Posterior vena cava (tissue), 2 donors: ENCODE measurements at regions of chr9 and their contacts with region 1.

Region 1: DNA sequence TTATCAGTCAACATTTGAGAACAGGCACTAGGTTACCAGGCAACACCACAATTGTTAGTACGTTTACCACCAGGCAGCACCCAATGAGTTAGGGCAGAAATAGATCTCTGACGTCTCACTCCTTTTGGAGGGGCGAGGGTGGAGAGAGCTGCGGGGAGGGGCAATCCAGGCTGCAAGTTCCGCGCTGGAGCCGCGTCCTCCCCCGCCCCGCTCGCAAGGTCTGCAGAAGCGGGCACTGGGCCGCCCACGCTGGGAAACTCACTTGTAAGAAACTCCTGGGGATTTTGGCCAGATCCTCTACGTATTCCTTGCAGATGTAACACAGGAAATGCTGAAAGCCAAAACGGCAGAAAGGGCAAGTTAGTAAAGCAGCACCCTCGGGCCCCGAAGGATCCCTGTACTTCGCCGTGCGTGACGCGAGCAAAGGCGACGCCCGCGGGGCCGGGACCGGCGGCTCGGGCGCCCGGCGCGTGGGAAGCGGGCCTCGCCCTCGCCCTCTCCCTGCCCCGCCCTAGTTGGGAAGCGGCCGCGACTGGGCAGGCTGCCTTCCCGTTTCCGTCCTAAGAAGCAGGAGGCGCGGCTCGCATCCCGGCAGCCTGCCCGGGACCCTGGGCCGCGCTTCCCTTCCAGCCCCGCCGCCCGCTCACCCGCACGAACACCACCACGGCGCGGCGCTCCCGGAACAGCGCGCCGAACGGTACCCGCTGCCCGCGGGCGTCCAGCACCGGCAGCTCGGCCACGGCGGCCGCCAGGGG is 497 bp downstream of the PRXL2C start:
- DNase-seq: peak; percentile 96

Region 2: DNA sequence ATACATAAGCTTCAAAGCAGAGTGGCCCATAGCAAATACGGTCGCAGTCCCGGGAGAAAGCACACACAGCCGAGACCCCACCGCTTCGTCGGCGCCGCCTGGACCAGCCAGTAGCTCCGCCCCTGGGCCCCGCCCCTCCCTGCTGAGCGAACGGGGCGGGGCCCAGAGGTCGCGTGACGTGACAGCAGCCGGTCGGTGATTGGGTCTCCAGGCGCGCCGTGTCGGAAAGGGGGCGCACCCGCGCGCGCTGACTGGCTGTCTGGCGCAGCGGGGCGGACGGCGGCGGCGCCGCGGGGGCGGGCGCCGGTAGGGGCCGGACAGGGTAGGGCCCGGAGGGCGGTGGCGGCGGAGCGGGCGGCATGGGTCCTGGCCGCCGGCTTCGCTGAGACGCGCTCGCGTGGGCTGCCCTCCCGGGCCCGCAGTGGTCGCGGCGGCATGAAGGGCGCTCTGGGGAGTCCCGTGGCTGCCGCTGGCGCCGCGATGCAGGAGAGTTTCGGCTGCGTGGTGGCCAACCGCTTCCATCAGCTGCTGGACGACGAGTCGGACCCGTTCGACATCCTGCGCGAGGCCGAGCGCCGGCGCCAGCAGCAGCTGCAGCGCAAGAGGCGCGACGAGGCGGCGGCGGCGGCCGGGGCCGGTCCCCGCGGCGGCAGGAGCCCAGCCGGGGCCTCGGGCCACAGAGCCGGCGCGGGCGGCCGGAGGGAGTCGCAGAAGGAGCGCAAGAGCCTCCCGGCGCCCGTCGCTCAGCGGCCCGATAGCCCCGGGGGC is 204.6 kb before region 1 on chr9 and contains the start of gene HABP4:
- intact Hi-C with region 1: loop called in 1 of 2 experiments (anchors 10 kb)
- DNase-seq: peak; percentile 99
- total RNA-seq, gene HABP4: 30.9 to 37.4 TPM

Region 3: GRCh38 chr9:96604004-96604319 is 50.7 kb before region 1 on chr9:
- intact Hi-C with region 1: no loop called
- DNase-seq: no peak